Aorta (tissue), 5 donors: ENCODE measurements at regions of chr20 and their contacts with region 1.

Region 1: DNA sequence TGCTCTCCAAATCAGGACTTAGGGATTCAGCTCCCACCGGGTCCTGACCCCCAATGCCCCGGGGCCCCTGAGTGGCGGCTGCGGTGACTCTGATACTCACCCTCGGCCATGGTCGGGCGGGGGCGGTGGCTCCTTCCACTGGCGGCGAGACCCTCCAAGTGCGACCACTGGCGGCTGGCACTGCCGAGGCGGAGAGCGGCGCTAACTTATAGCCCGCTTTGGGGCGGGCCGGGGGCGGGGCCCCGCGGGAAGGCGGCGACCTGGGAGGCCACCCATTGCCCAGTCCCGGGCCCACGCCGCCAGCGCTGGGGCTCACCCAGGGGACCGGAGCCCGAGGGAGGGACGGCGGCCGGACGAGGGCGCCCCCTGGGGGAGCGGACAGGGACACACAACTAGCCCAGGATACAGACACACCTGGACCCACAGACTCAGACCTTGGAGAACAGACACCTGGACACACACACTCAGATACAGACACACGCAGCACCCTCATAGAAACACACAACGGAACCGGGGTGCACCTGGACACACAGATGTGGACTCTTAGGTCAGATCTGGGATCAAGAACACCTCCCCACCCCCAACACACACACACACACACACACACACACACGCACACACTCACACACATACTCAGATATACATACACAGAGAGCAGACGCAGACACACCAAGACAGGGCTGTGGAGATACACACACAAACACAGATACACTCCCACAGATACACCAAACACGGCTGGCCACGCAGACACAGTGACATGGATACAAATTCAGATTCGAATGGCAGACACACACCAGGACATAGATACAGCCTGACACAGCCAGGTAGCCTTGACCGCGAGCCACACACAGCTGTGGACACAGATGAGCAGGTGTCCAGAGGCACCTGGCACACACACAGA is at the start of gene TGM2:
- DNase-seq: peak; percentile 89 to 96
- ATAC-seq: peak; percentile 89
- H3K4me3 ChIP-seq: peak within 1 kb of the TSS; percentile 35 to 38
- H3K27ac ChIP-seq: peak within 1 kb of the TSS in 1 of 2 donors; percentile 71
- H3K4me1 ChIP-seq: peaks cover 0 to 1% of the 10 kb centered on the region in 2 donors
- H3K27me3 ChIP-seq: no peaks in the 10 kb centered on the region
- total RNA-seq, gene TGM2: 449 to 561 TPM

Region 2: DNA sequence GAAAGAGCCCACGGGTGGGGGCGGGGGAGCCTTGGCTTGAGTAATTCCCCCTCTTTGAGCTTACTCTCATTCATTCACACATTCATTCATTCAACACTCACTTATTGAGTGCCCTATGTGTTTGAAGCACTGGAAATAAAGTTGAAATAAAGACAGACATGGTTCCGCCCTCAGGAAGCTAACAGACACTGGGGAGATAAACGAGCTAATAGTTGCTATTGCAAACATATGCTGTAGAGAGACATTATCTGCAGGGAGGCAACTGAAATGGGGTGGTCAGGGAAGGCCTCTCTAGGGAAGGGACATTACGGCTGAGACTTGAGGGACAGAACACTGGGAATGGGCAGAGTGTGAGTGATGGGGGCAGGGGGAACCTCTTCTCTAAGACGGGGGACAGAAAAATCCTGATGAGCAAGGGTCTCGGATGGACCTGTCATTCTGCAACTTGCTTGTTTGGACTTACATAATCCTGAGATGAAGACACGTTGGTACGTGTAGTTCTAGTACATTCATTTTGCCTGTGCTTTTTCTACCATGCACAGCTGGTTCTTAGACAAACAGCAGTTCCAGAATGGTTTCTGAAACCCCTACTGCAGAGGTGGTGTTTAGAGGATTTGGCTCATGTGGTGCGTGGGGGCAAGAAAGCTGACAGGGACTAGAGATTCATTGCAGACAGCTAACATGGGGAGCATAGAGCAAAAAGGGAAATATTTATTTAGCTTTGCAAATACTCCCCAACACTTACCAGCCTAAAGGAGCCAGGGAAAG is 566.6 kb before region 1 on chr20:
- intact Hi-C with region 1: no loop called
- DNase-seq: peak in 1 of 2 donors; percentile 22
- ATAC-seq: no peak
- H3K4me3 ChIP-seq: no peak overlapping the region
- H3K27ac ChIP-seq: no peak overlapping the region
- H3K4me1 ChIP-seq: no peaks in the 10 kb centered on the region
- H3K27me3 ChIP-seq: no peaks in the 10 kb centered on the region

Region 3: DNA sequence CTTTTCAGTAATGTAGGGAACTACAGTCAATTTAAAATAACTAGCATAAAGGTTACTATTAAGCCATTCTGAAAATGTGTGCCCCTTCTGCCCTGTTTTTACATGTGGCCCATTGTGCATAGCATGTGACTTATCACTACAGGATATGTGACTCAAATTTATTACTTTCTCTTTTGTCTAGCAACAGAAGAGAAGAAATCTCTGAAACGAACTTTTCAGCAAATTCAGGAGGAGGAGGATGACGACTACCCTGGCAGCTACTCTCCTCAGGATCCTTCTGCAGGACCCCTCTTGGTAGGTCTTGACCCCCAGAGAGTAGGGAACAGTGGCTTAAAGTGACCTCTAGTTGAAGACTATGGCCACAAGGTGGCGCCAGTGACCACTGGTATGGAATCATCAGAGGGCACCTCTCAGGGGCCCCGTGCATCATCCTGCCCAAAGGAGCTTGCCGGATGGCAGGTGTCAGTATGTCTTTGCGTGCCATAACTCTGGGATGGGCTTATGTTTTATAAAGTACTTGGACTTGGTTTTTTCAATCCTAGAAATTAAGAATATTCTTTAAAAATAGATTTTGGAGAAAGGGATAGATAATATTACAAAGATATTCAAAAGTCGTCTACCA is 107.9 kb before region 1 on chr20:
- intact Hi-C with region 1: loop called (anchors 1 to 5 kb)
- DNase-seq: peak; percentile 88 to 95
- ATAC-seq: peak; percentile 85
- H3K4me3 ChIP-seq: no peak overlapping the region
- H3K27ac ChIP-seq: no peak overlapping the region
- H3K4me1 ChIP-seq: no peaks in the 10 kb centered on the region
- H3K27me3 ChIP-seq: no peaks in the 10 kb centered on the region

Region 4: GRCh38 chr20:38073307-38074071 is 91.8 kb before region 1 on chr20:
- intact Hi-C with region 1: loop called (anchors 1 to 2 kb)
- DNase-seq: peak in 1 of 2 donors; percentile 77
- ATAC-seq: peak; percentile 90
- H3K4me3 ChIP-seq: no peak overlapping the region
- H3K27ac ChIP-seq: peak overlapping the region; percentile 51 to 85
- H3K4me1 ChIP-seq: peaks cover 7% of the 10 kb centered on the region in 2 donors
- H3K27me3 ChIP-seq: no peaks in the 10 kb centered on the region

Region 5: DNA sequence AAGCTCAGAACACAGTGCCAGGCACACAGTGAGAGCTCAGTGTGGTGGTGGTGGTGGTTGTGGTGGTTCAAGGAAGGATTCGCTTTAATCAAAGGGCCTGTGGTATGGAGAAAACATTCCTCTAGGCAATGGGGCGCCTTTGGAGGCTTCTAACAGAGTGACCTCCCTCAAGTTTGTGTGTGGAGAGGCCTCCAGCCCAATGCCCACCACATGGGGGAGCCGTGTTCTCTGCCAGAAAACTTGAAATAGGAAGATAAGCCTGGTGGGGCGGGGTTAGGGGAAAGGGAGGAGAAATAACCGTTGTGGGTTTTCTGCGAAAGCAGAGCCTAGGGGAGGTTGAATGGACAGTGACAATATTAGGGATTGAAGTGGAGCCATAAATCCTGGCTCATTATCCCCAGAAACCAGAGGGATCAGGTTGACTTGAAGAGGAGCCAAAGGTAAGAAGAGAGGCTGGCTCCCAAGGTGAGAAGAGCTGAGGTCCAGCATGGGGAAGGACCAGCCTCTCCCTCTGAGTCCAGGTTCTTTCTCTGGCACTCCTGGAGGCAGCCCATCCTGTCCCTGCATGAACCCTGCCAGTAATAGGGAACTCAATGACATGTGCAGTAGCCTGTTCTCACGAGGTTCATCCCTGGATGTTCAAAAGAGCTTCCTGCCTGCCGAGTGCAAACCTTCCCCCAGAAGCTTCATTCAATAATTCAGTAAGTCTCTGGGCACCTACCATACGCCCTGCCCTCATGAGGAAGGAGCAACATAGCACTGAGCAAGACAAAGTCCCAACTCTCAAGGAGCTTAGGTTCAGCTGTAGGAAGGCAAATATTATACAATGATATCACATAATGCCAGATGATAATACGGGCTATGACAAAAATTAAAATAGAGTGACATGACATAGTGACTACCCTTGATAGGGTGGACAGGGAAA is 51.7 kb before region 1 on chr20:
- intact Hi-C with region 1: no loop called
- DNase-seq: no peak
- ATAC-seq: no peak
- H3K4me3 ChIP-seq: no peak overlapping the region
- H3K27ac ChIP-seq: no peak overlapping the region
- H3K4me1 ChIP-seq: peaks cover 2 to 8% of the 10 kb centered on the region in 2 donors
- H3K27me3 ChIP-seq: no peaks in the 10 kb centered on the region

Region 6: DNA sequence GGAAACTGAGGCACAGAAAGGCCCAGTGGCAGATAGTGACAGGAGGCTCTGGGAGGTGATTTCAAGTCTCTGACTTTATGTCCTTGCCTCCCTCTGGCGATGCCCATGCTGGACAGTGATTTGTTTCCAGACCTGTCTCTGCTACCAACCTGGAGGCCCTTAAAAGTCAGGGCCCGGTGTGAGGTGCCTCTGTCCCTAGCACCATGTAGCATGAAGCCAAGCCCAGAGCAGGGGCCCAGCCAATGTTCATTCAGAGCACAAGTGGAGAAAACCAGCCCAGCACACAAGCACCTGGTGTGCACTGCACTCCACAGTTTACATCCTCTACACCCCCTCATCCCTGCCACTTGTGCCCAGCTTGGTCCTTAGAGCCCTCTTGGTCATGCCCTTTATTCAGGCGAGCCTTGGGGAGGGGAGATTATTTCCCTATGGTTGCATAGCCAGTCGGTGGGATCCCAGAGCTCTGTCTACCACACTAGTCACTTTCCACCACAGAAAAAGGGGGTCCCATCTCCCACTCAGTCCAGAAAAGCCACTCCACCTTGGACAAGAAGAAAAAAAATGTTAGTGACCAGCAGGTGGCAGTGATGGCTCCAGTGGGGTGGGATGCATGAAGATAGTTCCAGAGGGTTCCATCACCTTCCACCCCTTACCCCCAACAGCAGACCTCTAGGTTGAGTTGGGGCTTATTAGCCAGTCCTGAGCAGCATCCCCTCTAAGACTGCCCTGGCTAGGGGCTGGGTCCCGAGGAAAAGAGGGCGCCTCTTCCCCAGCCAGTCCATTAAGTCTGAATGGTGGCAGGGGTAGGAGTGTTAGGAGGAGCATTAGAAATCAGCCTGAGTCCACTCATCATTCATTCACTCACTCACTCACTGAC is 64.3 kb after region 1 on chr20:
- intact Hi-C with region 1: no loop called
- DNase-seq: peak in 1 of 2 donors; percentile 47
- ATAC-seq: no peak
- H3K4me3 ChIP-seq: no peak overlapping the region
- H3K27ac ChIP-seq: no peak overlapping the region
- H3K4me1 ChIP-seq: no peaks in the 10 kb centered on the region
- H3K27me3 ChIP-seq: no peaks in the 10 kb centered on the region